MCF 10A (cell line): ENCODE measurements at regions of chr2 and their contacts with region 1.

Region 1: DNA sequence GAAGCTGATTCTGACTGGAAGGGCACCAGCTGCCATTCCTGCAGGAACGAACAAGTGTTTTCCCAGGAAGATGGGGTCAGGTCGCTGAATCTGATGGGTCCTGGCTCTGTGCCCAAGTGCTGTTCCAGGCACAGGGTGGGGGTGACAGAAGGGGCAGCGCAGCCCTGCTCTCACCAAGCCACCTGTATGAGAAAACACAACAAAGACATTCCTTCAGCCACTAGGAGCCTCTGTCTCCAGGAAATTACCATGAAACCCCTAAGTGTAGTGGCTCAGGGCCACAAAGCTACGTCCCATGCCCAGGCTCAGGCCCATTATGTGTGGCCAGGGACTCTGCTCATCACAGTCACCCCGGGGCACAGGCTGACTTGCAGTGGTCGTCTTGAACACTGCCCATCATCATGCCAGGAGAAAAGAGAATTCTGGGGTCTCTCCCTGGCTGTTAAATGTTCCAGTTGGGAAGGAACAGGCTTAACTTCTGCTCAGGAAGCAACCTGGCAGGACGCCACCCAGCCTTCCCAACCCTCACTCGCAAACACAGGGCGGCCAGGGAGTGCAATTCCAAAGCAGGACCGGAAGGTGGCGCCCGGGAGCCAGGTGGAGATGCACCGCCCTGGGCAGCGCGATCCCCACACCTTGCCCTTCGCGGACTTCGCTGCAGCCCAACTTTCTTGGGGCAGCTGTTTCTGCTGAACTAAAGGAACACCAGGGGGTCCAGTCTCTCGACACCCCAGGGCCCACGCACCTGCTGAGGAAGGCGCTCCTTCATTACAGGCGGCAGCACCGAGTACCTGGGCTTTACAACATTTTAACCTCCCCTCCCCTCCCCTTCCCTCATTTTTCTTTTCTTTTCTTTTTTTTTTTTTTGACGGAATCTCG is 11.0 kb upstream of the SFTPB start:
- DNase-seq: peak; percentile 91
- H3K4me3 Mint-ChIP-seq: no peak overlapping the region
- H3K27ac Mint-ChIP-seq: no peak overlapping the region
- H3K4me1 Mint-ChIP-seq: peaks cover 32% of the 10 kb centered on the region
- H3K27me3 Mint-ChIP-seq: no peaks in the 10 kb centered on the region
- CTCF ChIP-seq: peak; percentile 99

Region 2: DNA sequence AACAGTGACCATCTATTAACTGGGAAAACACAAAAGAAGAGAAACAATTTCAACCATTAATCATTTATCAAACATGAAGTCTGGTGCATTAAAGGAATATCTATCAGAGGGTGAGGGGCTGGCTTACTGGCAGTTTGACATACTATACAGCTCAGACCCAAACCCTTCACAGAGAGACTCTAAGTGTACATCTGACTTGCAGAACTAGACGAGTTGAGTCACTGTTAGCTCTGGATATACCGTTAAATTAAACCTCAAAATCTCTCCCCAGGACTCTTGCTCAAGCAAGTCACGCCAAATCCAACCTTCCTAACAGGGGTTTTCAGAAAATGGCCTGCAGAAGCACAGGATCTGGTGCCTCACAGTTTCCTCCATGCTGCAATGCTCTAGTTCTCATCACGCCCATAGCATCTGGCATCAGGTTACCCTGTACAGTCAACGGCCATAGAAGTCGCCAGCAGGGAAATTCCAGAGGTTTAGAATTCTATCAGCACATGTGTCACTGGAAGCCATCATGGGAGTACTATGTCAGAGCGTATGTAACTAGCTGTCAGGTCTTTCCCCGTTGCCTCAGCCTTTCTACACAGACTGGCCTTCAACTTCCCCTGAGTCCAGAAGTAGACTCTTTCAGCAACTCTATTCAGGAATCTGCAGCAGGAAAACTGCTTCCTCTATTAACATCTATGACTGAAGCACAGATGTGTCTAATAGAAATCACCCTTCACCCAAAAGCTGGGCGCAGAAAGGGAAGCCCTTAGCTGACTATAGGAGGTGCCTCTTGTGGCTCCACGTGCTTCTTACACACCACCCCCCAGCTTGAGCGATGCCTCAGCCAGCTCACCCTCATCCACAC is 360.6 kb before region 1 on chr2:
- CTCF ChIA-PET with region 1: no interaction called
- POLR2A ChIA-PET with region 1: no interaction called
- intact Hi-C with region 1: no loop called
- DNase-seq: peak; percentile 81
- H3K4me3 Mint-ChIP-seq: no peak overlapping the region
- H3K27ac Mint-ChIP-seq: no peak overlapping the region
- H3K4me1 Mint-ChIP-seq: peaks cover 32% of the 10 kb centered on the region
- H3K27me3 Mint-ChIP-seq: no peaks in the 10 kb centered on the region
- CTCF ChIP-seq: no peak

Region 3: DNA sequence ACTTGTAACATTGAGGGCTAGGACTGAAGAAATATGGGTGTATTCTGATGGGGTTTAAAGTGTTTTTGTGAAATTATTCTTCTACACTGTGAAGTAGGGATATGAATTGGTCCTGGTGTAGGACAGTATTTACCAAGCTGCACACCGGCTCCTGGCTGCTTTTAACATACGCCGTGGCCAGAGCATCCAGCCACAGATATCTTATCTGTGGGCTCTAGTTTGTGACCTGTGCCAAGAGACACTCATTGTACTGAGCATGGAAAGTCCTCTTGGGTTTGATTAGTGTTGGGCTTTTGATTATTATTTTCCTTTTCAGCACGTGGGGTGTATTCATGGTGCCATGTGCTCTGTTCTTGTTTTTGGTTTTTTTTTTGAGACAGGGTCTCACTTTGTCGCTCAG is 55.0 kb before region 1 on chr2:
- CTCF ChIA-PET with region 1: no interaction called
- POLR2A ChIA-PET with region 1: no interaction called
- intact Hi-C with region 1: no loop called
- DNase-seq: no peak
- H3K4me3 Mint-ChIP-seq: no peak overlapping the region
- H3K27ac Mint-ChIP-seq: peak overlapping the region; percentile 63
- H3K4me1 Mint-ChIP-seq: peaks cover 3% of the 10 kb centered on the region
- H3K27me3 Mint-ChIP-seq: no peaks in the 10 kb centered on the region
- CTCF ChIP-seq: no peak

Region 4: DNA sequence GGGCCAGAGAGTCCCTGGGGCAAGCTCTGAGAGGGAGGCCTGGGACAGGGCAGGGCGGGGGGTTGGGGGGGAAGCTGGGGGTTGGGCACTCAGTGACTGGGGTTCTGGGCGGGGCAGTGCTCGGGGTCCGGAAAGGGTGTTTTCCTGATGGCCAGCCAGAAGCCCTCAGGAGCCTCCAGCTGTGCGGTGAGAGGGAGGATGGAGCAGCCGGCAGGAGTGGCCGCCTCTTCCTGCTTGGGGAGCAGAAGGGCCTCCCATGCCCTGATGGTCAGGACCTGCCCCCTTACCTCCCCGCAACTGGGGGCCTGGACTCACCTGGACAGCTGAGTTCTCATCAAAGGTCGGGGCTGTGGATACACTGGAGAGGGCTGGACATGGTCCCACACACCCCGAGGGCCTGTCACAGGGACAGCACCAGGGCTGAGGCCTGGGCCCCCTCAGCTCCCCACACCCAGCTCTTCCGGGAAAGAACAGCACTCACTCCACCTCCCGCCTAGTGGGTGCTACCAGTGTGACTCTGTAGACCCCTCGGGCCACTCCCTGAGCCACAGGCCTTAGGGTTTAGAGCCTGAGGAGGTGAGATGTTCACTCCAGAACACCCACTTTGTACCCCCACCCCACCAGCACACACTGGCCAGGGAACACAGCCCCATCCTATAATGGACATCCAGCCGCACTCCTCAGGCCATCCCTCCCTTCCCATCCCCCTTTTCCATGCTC is 17.7 kb before region 1 on chr2:
- CTCF ChIA-PET with region 1: interaction called, 12 read pairs
- POLR2A ChIA-PET with region 1: no interaction called
- intact Hi-C with region 1: no loop called
- DNase-seq: no peak
- H3K4me3 Mint-ChIP-seq: no peak overlapping the region
- H3K27ac Mint-ChIP-seq: no peak overlapping the region
- H3K4me1 Mint-ChIP-seq: peaks cover 4% of the 10 kb centered on the region
- H3K27me3 Mint-ChIP-seq: no peaks in the 10 kb centered on the region
- CTCF ChIP-seq: no peak

Region 5: GRCh38 chr2:85707304-85707703 is 28.3 kb after region 1 on chr2:
- CTCF ChIA-PET with region 1: interaction called, 166 read pairs
- POLR2A ChIA-PET with region 1: interaction called, 22 read pairs
- intact Hi-C with region 1: loop called (anchors 1 kb)
- DNase-seq: peak; percentile 95
- H3K4me3 Mint-ChIP-seq: peak overlapping the region; percentile 36
- H3K27ac Mint-ChIP-seq: peak overlapping the region; percentile 94
- H3K4me1 Mint-ChIP-seq: peaks cover 56% of the 10 kb centered on the region
- H3K27me3 Mint-ChIP-seq: no peaks in the 10 kb centered on the region
- CTCF ChIP-seq: peak; percentile 65

Region 6: GRCh38 chr2:85728883-85729824 is 50.1 kb after region 1 on chr2:
- CTCF ChIA-PET with region 1: interaction called, 18 read pairs
- POLR2A ChIA-PET with region 1: no interaction called
- intact Hi-C with region 1: loop called (anchors 1 kb)
- DNase-seq: peak; percentile 85
- H3K4me3 Mint-ChIP-seq: no peak overlapping the region
- H3K27ac Mint-ChIP-seq: no peak overlapping the region
- H3K4me1 Mint-ChIP-seq: peaks cover 6% of the 10 kb centered on the region
- H3K27me3 Mint-ChIP-seq: no peaks in the 10 kb centered on the region
- CTCF ChIP-seq: peak; percentile 91

Region 7: GRCh38 chr2:85804583-85804982 is 125.5 kb after region 1 on chr2:
- CTCF ChIA-PET with region 1: interaction called, 10 read pairs
- POLR2A ChIA-PET with region 1: no interaction called
- intact Hi-C with region 1: no loop called
- DNase-seq: peak; percentile 51
- H3K4me3 Mint-ChIP-seq: no peak overlapping the region
- H3K27ac Mint-ChIP-seq: no peak overlapping the region
- H3K4me1 Mint-ChIP-seq: peaks cover 7% of the 10 kb centered on the region
- H3K27me3 Mint-ChIP-seq: no peaks in the 10 kb centered on the region
- CTCF ChIP-seq: peak; percentile 60

Region 8: DNA sequence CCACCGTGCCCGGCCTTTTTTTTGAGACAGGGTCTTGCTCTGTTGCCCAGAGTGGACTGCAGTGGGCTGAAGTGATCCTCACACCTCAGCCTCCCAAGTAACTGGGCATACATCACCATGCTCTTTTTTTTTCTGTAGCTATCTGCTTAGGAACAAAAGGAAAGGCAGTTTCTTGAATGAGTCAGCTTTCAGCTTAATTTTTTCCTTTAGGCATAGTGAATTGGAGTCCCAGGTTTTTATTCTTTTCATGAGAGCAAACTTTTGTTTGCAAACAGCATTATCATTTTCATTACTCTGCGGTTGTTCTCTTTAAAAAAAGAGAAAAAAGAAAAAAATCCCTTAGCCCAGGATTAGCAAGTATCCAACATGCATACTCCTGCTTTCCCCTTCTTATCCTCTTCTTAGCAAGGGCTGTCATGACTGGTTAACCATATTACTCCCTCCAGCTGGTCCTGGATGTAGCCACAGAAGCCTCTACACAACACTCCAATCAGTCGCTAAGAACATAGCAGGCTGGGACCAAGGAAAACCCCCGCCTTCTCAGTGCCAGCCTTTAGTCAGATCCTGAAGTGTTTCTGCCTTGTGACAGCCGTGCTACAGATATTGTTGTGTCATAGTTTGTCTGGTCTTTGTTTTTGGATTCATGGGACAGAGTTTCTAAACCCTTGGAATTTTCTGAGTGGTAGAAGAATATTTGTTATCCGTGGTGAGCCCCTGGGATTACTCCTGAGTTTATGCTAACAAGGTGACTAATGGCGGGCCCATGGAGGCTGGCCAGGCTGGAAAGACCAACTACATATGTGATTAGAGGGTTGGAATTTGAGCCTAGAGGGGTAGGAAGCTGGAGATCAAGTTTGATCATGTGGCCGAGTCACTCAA is 233.0 kb after region 1 on chr2:
- CTCF ChIA-PET with region 1: no interaction called
- POLR2A ChIA-PET with region 1: no interaction called
- intact Hi-C with region 1: no loop called
- DNase-seq: peak; percentile 91
- H3K4me3 Mint-ChIP-seq: no peak overlapping the region
- H3K27ac Mint-ChIP-seq: peak overlapping the region; percentile 97
- H3K4me1 Mint-ChIP-seq: peaks cover 52% of the 10 kb centered on the region
- H3K27me3 Mint-ChIP-seq: no peaks in the 10 kb centered on the region
- CTCF ChIP-seq: no peak